Gastrocnemius medialis (tissue), 4 donors: ENCODE measurements at regions of chr9 and their contacts with region 1.

Region 1: DNA sequence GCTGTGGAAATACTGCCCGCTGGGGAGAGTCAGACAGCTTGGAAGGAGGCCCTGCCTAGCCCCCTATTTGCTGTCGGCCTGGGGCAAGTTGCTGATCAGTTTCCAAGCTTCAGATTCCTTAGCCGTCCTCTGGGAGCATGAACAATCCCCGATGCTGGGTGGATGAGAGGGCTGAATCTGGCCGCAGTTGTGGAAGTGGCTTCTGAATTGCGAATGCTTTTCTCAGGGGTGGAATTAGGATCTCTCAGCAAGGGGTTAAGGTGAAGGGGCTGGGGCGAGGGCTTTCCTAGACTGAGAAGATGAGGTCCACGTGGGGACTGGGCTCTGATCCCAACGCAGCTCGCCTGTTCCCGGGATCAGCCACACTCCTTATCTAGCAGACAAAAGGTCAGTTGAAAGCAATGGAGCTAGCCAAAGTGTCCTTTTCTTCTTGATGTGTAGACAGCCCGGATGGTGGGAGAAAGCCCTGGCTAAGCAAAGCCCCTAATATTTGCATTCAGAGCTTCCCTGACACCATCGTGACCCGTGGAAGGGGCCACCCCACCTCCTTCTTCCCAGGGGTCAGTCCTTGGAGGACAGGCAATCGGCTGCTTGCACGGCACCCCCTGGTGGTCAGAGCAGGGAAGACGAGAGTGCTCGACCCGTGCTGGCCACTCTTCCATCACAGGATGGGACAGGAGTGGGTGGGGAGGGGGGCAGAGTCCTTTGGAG is 54.9 kb downstream of the COL15A1 start:
- DNase-seq: peak; percentile 41 to 68
- ATAC-seq: peak; percentile 68 to 76
- H3K4me3 ChIP-seq: peak overlapping the region in 2 of 4 donors; percentile 0 to 7
- H3K27ac ChIP-seq: peak overlapping the region; percentile 43 to 61 (median 54)
- H3K4me1 ChIP-seq: peaks cover 3 to 10% of the 10 kb centered on the region in 2 donors
- H3K27me3 ChIP-seq: no peaks in the 10 kb centered on the region
- CTCF ChIP-seq: peak; percentile 74 to 87 (median 85)
- POLR2A ChIP-seq: no peak

Region 2: GRCh38 chr9:98484152-98484551 is 514.4 kb before region 1 on chr9:
- in situ Hi-C with region 1: no loop called
- intact Hi-C with region 1: no loop called
- DNase-seq: no peak
- ATAC-seq: no peak
- H3K4me3 ChIP-seq: no peak overlapping the region
- H3K27ac ChIP-seq: no peak overlapping the region
- H3K4me1 ChIP-seq: no peaks in the 10 kb centered on the region
- H3K27me3 ChIP-seq: no peaks in the 10 kb centered on the region
- CTCF ChIP-seq: no peak
- POLR2A ChIP-seq: no peak

Region 3: GRCh38 chr9:98848450-98849149 is 150.0 kb before region 1 on chr9:
- in situ Hi-C with region 1: loop called in 1 of 4 experiments (anchors 10 kb)
- intact Hi-C with region 1: loop called (anchors 1 kb)
- DNase-seq: peak; percentile 78 to 82
- ATAC-seq: peak; percentile 97 to 99
- H3K4me3 ChIP-seq: peak overlapping the region; percentile 43 to 49 (median 46)
- H3K27ac ChIP-seq: peak overlapping the region in 2 of 4 donors; percentile 7 to 41
- H3K4me1 ChIP-seq: no peaks in the 10 kb centered on the region
- H3K27me3 ChIP-seq: no peaks in the 10 kb centered on the region
- CTCF ChIP-seq: peak; percentile 70 to 91 (median 76)
- POLR2A ChIP-seq: no peak

Region 4: DNA sequence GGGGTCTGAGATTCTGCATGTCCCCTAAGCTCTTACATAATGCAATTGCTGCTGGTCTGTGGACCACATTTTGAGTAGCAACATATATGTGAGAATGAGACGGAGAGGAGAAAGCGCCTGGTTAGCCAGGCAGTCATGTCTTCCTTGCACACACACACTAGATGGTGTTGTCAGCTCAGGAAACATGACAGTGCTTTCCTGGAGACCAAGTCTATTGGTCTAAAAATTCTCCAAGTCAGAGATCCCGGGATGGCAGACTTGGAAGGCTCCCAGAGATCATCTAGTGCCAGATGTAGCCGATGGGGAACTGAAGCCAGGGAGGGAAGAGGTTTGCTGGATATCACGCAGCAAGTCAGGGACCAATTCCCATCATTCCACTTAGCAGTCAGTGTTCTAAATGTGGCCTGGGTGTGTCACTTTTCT is 137.7 kb before region 1 on chr9:
- in situ Hi-C with region 1: loop called (anchors 5 to 10 kb)
- intact Hi-C with region 1: loop called (anchors 2 kb)
- DNase-seq: peak; percentile 25 to 48
- ATAC-seq: peak; percentile 63 to 70
- H3K4me3 ChIP-seq: no peak overlapping the region
- H3K27ac ChIP-seq: peak overlapping the region in 3 of 4 donors; percentile 11 to 34 (median 33)
- H3K4me1 ChIP-seq: peaks cover 4 to 29% of the 10 kb centered on the region in 2 donors
- H3K27me3 ChIP-seq: no peaks in the 10 kb centered on the region
- CTCF ChIP-seq: peak in 2 of 5 experiments; percentile 43 to 48
- POLR2A ChIP-seq: no peak

Region 5: DNA sequence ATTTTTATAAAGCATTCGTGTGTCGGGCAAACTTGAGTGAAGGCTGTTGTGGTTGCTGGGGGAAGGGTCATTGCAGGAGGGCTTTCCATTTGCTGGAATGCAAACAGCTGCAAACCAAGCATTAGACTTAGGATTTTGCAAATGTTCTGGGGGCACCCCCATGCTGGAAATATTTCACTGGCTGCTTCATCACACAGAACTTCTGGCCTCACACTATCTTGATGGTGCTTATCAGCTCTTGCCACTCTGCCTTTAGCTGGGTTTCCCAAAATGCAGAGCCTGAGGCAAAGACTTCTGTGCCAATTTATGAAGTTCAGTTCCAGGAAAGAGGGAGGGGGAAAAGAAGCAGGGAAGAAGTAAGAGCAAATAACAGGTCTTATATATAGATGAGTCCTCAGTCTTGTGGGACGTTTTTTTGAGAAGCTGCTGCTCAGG is 63.5 kb before region 1 on chr9:
- in situ Hi-C with region 1: no loop called
- intact Hi-C with region 1: no loop called
- DNase-seq: no peak
- ATAC-seq: no peak
- H3K4me3 ChIP-seq: no peak overlapping the region
- H3K27ac ChIP-seq: no peak overlapping the region
- H3K4me1 ChIP-seq: no peaks in the 10 kb centered on the region
- H3K27me3 ChIP-seq: no peaks in the 10 kb centered on the region
- CTCF ChIP-seq: no peak
- POLR2A ChIP-seq: no peak

Region 6: DNA sequence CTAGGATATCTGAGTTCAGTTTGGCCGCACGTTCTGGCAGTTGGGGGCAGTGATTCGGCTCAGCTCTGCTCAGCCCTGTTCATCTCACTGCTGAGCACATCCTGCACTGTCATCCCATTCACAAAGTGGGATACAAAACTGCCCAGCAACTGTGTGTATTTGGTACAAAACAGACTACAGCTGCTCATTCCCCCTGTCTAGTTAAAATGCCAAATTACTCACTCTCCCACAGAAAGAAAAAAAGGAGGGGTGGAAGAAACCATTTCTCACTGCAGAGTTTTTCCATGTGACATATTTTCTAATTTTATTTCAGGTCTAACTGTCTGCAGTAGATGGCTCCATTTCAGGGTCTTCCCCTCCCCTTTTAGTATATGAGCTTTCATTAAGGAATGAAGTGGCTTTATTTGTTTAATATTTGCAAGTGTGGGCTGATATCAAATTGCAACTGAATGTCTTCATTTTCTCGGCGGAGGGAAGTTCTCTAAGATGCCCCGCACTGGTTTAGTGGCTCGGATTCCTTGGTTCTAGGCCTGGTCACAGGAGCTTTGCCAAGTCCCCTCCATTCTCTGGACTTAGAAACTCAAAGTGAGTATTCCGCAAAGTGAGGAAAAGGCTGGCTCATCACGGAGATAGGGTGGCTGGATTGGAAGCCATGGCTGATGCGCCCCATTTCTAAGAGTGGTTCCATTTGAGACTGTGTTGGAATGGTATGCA is 40.2 kb before region 1 on chr9:
- in situ Hi-C with region 1: no loop called
- intact Hi-C with region 1: no loop called
- DNase-seq: no peak
- ATAC-seq: peak; percentile 48 to 51
- H3K4me3 ChIP-seq: no peak overlapping the region
- H3K27ac ChIP-seq: peak overlapping the region in 3 of 4 donors; percentile 8 to 37 (median 35)
- H3K4me1 ChIP-seq: peaks cover 0 to 3% of the 10 kb centered on the region in 2 donors
- H3K27me3 ChIP-seq: no peaks in the 10 kb centered on the region
- CTCF ChIP-seq: no peak
- POLR2A ChIP-seq: no peak

Region 7: GRCh38 chr9:98974994-98975712 is 23.4 kb before region 1 on chr9:
- in situ Hi-C with region 1: no loop called
- intact Hi-C with region 1: loop called (anchors 1 kb)
- DNase-seq: peak; percentile 59 to 67
- ATAC-seq: peak; percentile 67 to 75
- H3K4me3 ChIP-seq: peak overlapping the region; percentile 15 to 50 (median 37)
- H3K27ac ChIP-seq: peak overlapping the region; percentile 39 to 74 (median 70)
- H3K4me1 ChIP-seq: peaks cover 22 to 30% of the 10 kb centered on the region in 2 donors
- H3K27me3 ChIP-seq: peaks cover 0 to 3% (median 0%) of the 10 kb centered on the region in 3 donors
- CTCF ChIP-seq: peak; percentile 88 to 98 (median 93)
- POLR2A ChIP-seq: no peak

Region 8: DNA sequence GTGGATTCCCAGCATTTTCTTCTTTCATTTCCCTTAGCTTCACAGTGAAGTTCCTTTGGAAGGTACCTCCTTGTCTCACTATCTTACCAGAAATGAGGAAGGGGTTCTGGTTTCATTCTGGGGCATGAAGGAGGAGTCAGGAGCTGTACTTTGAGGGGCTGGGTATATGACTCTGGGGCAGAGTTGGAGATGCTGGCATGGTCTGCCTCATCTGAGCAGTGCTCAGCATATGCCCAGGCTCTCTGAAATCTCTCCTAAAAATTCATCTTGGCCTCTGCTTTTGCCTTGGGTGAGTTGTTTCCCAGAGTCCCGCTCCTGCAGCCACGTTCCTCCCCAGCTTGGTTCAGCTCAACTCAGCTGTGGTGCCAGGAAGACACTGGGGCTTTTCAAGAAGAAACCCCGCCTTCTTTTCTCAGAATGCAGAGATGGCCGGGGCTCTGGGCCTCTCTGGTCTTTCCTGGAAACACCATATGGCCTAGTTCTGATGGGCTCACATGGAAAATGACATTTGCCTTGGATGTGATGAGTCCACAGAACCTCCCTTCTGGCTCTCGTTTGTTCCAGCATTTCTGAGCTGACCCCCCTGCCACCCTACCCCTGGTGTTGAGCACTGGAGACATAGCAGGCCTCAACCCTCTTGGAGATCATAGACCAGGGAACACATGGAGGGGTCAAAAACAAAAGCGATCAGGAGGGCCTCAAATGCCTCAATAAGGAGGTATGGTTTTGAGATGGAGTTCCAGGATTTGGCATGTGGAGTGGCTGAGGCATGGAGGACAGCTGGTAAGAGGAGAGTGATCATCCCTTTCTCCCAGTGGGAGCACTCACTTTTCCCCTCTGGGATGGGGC is 94.3 kb after region 1 on chr9:
- in situ Hi-C with region 1: no loop called
- intact Hi-C with region 1: no loop called
- DNase-seq: no peak
- ATAC-seq: no peak
- H3K4me3 ChIP-seq: no peak overlapping the region
- H3K27ac ChIP-seq: no peak overlapping the region
- H3K4me1 ChIP-seq: no peaks in the 10 kb centered on the region
- H3K27me3 ChIP-seq: no peaks in the 10 kb centered on the region
- CTCF ChIP-seq: no peak
- POLR2A ChIP-seq: no peak

Region 9: DNA sequence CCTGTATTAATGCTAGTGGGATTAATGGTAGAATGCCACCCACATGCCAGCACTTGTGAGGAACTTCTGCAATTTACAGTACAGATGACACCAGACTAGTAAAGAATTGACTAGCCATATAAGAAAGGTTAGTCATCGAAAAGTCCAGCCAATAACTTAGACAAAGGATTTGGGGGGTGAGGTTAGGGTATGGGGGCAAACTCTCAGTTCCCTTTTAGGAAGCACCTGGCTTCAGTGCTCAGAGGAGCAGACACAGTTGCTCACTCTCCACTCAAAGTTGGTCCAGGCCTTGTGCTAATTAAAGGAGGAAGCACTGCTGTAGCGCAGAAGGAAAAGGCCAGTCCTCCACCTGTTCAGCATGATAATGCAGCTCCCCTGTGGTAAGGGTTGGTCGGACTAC is 131.5 kb after region 1 on chr9:
- in situ Hi-C with region 1: loop called in 3 of 4 experiments (anchors 5 to 25 kb)
- intact Hi-C with region 1: no loop called
- DNase-seq: no peak
- ATAC-seq: no peak
- H3K4me3 ChIP-seq: no peak overlapping the region
- H3K27ac ChIP-seq: no peak overlapping the region
- H3K4me1 ChIP-seq: peaks cover 48 to 50% of the 10 kb centered on the region in 2 donors
- H3K27me3 ChIP-seq: no peaks in the 10 kb centered on the region
- CTCF ChIP-seq: no peak
- POLR2A ChIP-seq: no peak

Region 10: GRCh38 chr9:99140685-99141314 is 142.2 kb after region 1 on chr9:
- in situ Hi-C with region 1: loop called (anchors 5 to 25 kb)
- intact Hi-C with region 1: loop called (anchors 1 kb)
- DNase-seq: peak; percentile 19 to 26
- ATAC-seq: peak; percentile 79 to 88
- H3K4me3 ChIP-seq: no peak overlapping the region
- H3K27ac ChIP-seq: no peak overlapping the region
- H3K4me1 ChIP-seq: peaks cover 23 to 37% of the 10 kb centered on the region in 2 donors
- H3K27me3 ChIP-seq: no peaks in the 10 kb centered on the region
- CTCF ChIP-seq: peak; percentile 81 to 96 (median 93)
- POLR2A ChIP-seq: no peak